ENCODE measurements at regions of chr4 and their contacts with region 1.

Region 1: DNA sequence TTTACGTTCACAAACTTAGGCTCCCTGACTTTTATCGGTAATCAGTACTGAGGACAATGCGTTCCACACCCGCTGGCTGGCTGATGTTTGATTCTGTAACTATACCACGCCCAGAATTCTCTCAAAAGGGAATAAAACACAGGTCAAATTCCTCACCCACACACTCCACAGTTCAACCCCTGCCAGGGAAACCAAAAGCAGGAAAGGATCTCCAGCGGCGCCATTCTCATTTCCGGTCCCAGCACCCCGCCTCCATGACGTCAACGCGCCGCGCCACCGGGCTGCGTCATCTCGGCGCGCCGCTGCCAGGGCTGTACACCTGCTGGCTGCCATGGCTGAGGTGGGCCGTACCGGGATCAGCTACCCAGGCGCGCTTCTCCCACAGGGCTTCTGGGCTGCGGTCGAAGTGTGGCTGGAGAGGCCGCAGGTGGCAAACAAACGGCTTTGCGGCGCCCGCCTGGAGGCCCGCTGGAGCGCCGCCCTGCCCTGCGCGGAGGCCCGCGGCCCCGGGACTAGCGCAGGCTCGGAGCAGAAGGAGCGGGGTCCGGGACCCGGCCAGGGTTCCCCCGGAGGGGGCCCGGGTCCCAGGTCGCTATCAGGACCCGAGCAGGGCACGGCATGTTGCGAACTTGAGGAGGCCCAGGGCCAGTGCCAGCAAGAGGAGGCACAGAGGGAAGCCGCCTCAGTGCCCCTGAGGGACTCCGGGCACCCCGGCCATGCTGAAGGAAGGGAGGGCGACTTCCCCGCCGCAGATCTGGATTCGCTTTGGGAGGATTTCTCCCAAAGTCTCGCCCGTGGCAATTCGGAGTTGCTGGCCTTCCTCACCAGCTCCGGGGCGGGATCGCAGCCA is at the starts of genes ACOX3 and TRMT44:
- H3K4me3 Mint-ChIP-seq: peak within 1 kb of the TSS; percentile 84
- H3K27ac Mint-ChIP-seq: peak within 1 kb of the TSS; percentile 97
- H3K4me1 Mint-ChIP-seq: peaks cover 56% of the 10 kb centered on the region
- H3K27me3 Mint-ChIP-seq: no peaks in the 10 kb centered on the region

Region 2: DNA sequence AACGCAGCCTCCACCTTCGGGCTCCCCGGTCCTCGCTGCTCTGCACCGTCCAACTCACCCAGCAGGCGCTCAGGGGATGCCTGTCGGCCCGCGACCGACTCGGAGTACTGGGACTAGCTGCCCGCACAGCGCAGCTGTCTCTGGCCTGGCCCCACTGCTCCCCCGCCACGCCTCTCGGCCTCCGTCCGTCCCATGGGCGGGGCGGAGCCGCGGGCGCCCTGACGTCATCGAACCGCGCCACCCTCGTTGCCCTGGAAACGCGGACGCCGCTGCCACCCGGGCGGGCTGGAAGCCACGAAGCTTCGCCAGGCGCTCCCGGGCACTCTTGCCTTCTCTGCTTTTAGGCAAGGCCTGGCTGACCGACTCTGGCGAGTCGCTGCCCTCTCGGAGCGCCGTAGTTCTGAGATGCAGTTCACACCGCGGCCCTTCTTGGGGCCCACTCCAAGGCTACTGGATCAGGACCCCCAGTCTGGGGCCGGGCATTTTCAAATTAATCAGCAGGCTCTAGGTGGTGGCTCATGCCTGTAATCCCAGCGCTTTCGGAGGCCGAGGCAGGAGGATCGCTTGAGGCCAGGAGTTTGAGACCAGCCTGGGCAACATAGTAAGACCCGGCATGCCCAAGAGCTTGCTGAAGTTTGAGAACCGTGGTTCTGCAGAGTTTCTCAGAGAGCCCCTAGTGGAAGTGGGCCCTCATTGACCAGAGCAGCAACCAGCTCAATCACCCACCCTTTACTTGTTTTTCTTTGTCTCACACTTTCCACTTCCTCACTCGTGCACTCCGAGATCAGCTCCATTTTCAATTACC is 12.2 kb before region 1 on chr4:
- intact Hi-C with region 1: loop called (anchors 1 kb)
- H3K4me3 Mint-ChIP-seq: peak overlapping the region; percentile 98
- H3K27ac Mint-ChIP-seq: peak overlapping the region; percentile 96
- H3K4me1 Mint-ChIP-seq: peaks cover 29% of the 10 kb centered on the region
- H3K27me3 Mint-ChIP-seq: no peaks in the 10 kb centered on the region

Measured in dendritic cell treated with granulocyte-macrophage colony-stimulating factor and Interleukin-4, amounts not matched to agents 40 ng/mL and 50 ng/mL, for 4 days (primary cell).